Activated naive CD4-positive, alpha-beta T cell treated with anti-CD3 and anti-CD28 coated beads for 36 hours (primary cell): ENCODE measurements at regions of chr2 and their contacts with region 1.

Region 1: GRCh38 chr2:11753886-11754699 is 7.7 kb downstream of the LPIN1 start:
- DNase-seq: peak; percentile 88
- H3K4me3 Mint-ChIP-seq: peak overlapping the region; percentile 70
- H3K27ac Mint-ChIP-seq: peak overlapping the region; percentile 97
- H3K4me1 Mint-ChIP-seq: peaks cover 94% of the 10 kb centered on the region
- H3K27me3 Mint-ChIP-seq: no peaks in the 10 kb centered on the region

Region 2: DNA sequence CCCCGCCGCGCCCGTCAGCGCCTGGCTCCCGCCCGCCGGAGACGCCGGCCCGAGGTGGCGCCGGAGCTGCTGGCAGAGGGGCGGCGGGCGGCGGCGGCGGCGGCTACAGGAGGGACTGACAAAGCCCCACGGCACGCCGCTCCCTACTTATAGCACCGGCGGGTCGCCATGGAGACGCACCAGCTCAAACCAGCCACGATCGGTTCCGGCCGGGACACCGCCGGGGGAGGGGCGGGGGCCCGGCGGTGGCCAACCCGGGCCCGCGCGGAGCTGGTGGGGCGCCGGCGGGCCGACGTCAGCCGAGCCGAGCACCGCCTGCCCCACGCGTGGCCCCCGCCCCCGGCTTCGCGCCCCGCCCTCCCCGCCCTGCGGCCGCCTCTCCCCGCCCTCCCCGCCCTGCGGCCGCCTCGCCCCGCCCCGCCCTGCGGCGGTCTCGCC is 1305.9 kb before region 1 on chr2 and contains the start of gene ODC1:
- CTCF ChIA-PET with region 1: no interaction called
- intact Hi-C with region 1: loop called (anchors 5 kb)
- DNase-seq: peak; percentile 89
- H3K4me3 Mint-ChIP-seq: peak within 1 kb of the TSS; percentile 85
- H3K27ac Mint-ChIP-seq: peak within 1 kb of the TSS; percentile 91
- H3K4me1 Mint-ChIP-seq: peaks cover 56% of the 10 kb centered on the region
- H3K27me3 Mint-ChIP-seq: no peaks in the 10 kb centered on the region
- total RNA-seq, gene ODC1: 174 to 177 TPM

Region 3: DNA sequence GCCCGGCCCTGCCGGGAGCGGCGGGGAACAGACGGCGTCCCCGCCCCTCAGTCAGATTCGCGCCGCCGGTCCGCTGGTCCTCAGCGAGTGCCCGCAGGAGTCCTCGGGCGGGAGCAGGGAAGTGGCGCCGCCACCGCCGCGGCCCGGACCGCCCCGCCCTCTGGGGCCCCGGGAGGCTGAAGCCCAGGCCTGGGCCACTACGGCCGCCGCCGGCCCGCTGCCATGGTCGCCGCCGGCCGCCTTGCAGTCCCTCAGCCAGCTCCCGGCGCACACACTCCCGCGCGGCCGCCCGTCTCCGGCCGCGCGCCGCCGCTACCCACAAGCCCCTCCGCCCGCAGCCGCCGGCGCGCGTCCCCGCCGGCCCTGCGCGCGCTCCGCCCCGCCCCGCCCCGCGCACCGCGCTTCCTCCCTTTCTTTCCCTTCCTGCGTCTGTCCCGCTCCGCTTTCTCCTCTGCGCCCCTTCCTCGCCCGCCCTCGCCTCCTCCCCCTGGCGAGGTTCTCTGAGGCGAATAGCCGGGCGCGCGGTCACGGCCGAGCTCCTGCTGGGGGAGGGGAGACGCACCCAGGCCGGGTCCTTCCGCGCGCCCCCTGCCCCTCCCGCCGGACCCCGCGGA is 409.6 kb before region 1 on chr2 and contains the start of gene ROCK2:
- CTCF ChIA-PET with region 1: no interaction called
- intact Hi-C with region 1: loop called (anchors 10 kb)
- DNase-seq: peak; percentile 72
- H3K4me3 Mint-ChIP-seq: peak within 1 kb of the TSS; percentile 99
- H3K27ac Mint-ChIP-seq: peak within 1 kb of the TSS; percentile 85
- H3K4me1 Mint-ChIP-seq: peaks cover 29% of the 10 kb centered on the region
- H3K27me3 Mint-ChIP-seq: no peaks in the 10 kb centered on the region
- total RNA-seq, gene ROCK2: 8.4 to 9.4 TPM

Region 4: GRCh38 chr2:11621410-11621809 is 132.7 kb before region 1 on chr2:
- CTCF ChIA-PET with region 1: no interaction called
- intact Hi-C with region 1: no loop called
- DNase-seq: no peak
- H3K4me3 Mint-ChIP-seq: no peak overlapping the region
- H3K27ac Mint-ChIP-seq: no peak overlapping the region
- H3K4me1 Mint-ChIP-seq: no peaks in the 10 kb centered on the region
- H3K27me3 Mint-ChIP-seq: no peaks in the 10 kb centered on the region

Region 5: GRCh38 chr2:11631462-11631861 is 122.6 kb before region 1 on chr2:
- CTCF ChIA-PET with region 1: no interaction called
- intact Hi-C with region 1: no loop called
- DNase-seq: no peak
- H3K4me3 Mint-ChIP-seq: no peak overlapping the region
- H3K27ac Mint-ChIP-seq: no peak overlapping the region
- H3K4me1 Mint-ChIP-seq: no peaks in the 10 kb centered on the region
- H3K27me3 Mint-ChIP-seq: no peaks in the 10 kb centered on the region

Region 6: GRCh38 chr2:11688222-11689069 is 65.6 kb before region 1 on chr2:
- CTCF ChIA-PET with region 1: interaction called, 13 read pairs
- intact Hi-C with region 1: no loop called
- DNase-seq: peak; percentile 89
- H3K4me3 Mint-ChIP-seq: peak overlapping the region; percentile 32
- H3K27ac Mint-ChIP-seq: no peak overlapping the region
- H3K4me1 Mint-ChIP-seq: peaks cover 10% of the 10 kb centered on the region
- H3K27me3 Mint-ChIP-seq: peaks cover 5% of the 10 kb centered on the region

Region 7: DNA sequence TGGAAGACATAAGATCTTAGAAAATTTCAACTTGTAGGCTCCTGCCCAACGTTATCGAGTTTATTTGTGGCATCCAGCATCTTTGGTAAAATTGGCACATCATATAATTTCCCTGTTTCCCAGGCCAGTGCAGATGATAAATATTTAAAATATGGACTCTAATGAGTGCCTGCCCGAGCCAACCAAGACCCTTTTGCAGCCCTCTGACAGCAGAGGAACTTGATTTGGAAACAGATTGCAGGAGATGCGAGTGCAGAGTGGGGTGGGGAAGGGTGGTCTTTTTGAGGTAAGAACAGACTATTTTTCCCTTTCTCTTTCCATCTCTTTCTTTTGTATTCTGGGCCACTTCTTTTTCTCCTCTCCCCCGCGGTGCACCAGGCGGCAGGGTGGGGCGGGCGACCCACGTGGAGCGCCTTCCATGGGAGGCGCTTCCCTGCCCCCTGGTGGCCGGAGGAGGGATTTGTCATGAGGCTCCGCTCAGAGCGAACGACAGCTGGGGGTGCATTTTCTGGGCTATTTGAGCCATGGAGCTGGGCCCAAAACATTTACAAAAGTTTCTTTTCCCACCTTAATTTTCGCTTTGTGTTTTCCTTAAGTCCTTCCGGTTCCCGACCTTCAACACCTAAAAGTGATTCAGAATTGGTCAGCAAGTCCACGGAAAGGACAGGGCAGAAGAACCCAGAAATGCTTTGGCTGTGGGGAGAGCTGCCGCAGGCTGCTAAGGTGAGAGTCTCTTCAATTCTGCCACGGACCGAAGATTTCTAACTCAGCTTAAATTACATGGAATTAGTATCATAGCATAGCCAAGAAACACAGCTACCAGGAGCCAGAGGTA is 25.0 kb after region 1 on chr2:
- CTCF ChIA-PET with region 1: interaction called, 169 read pairs
- intact Hi-C with region 1: loop called (anchors 1 kb)
- DNase-seq: peak; percentile 91
- H3K4me3 Mint-ChIP-seq: peak overlapping the region; percentile 45
- H3K27ac Mint-ChIP-seq: peak overlapping the region; percentile 80
- H3K4me1 Mint-ChIP-seq: peaks cover 44% of the 10 kb centered on the region
- H3K27me3 Mint-ChIP-seq: no peaks in the 10 kb centered on the region

Region 8: GRCh38 chr2:12293874-12294273 is 539.8 kb after region 1 on chr2:
- CTCF ChIA-PET with region 1: no interaction called
- intact Hi-C with region 1: loop called (anchors 5 kb)
- DNase-seq: peak; percentile 18
- H3K4me3 Mint-ChIP-seq: no peak overlapping the region
- H3K27ac Mint-ChIP-seq: peak overlapping the region; percentile 75
- H3K4me1 Mint-ChIP-seq: peaks cover 55% of the 10 kb centered on the region
- H3K27me3 Mint-ChIP-seq: peaks cover 6% of the 10 kb centered on the region

Region 9: DNA sequence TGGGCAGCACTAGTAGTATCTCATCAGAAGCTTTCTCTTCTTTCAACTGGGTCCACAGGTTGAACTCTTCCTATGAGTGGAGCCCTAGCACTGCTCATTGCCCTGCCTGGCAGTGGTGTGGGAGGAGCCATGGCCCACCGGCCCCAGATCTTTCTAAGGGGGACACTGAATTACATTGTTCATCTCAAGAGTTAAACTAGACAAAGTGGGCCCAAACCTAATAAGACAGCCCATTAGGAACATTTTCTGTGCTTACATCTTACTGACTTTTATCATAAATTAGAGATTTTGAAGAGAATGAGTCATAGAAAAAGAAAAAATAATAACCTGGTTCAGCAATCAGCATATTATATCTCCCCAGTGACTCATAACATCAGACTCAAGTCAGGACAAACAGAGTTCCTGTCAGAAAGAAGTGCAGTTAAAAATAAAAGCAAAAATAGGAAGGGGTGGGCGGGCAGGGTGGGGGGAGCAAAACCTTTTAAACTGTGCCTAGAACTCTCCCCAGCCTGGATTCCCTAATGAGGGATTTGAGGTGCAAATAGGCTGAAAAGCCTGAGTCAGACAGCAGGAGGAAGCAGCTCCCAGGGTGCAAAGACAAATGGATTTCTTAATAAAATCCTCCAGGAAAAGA is 801.0 kb after region 1 on chr2:
- CTCF ChIA-PET with region 1: no interaction called
- intact Hi-C with region 1: loop called (anchors 2 kb)
- DNase-seq: peak; percentile 52
- H3K4me3 Mint-ChIP-seq: peak overlapping the region; percentile 5
- H3K27ac Mint-ChIP-seq: peak overlapping the region; percentile 86
- H3K4me1 Mint-ChIP-seq: peaks cover 35% of the 10 kb centered on the region
- H3K27me3 Mint-ChIP-seq: no peaks in the 10 kb centered on the region

Region 10: GRCh38 chr2:13230221-13230620 is 1476.1 kb after region 1 on chr2:
- CTCF ChIA-PET with region 1: no interaction called
- intact Hi-C with region 1: no loop called
- DNase-seq: no peak
- H3K4me3 Mint-ChIP-seq: no peak overlapping the region
- H3K27ac Mint-ChIP-seq: no peak overlapping the region
- H3K4me1 Mint-ChIP-seq: no peaks in the 10 kb centered on the region
- H3K27me3 Mint-ChIP-seq: peaks cover 12% of the 10 kb centered on the region